ENCODE measurements at regions of chr5 and their contacts with region 1.

Region 1: GRCh38 chr5:67003935-67004729 is 192.5 kb downstream of the CD180 start:
- DNase-seq: peak; percentile 76 to 95 (median 86)
- ATAC-seq: peak; percentile 81
- H3K4me3 ChIP-seq: peak overlapping the region; percentile 67
- H3K4me3 Mint-ChIP-seq: peak overlapping the region; percentile 94
- H3K27ac ChIP-seq: peak overlapping the region; percentile 69 to 77
- H3K27ac Mint-ChIP-seq: peak overlapping the region; percentile 96
- H3K4me1 ChIP-seq: peaks cover 23% of the 10 kb centered on the region
- H3K4me1 Mint-ChIP-seq: peaks cover 57% of the 10 kb centered on the region
- H3K27me3 ChIP-seq: no peaks in the 10 kb centered on the region
- H3K27me3 Mint-ChIP-seq: no peaks in the 10 kb centered on the region
- CTCF ChIP-seq: no peak

Region 2: GRCh38 chr5:66891183-66891925 is 112.8 kb before region 1 on chr5:
- CTCF ChIA-PET with region 1: no interaction called
- POLR2A ChIA-PET with region 1: no interaction called
- intact Hi-C with region 1: no loop called
- DNase-seq: no peak
- ATAC-seq: no peak
- H3K4me3 ChIP-seq: no peak overlapping the region
- H3K4me3 Mint-ChIP-seq: no peak overlapping the region
- H3K27ac ChIP-seq: no peak overlapping the region
- H3K27ac Mint-ChIP-seq: no peak overlapping the region
- H3K4me1 ChIP-seq: no peaks in the 10 kb centered on the region
- H3K4me1 Mint-ChIP-seq: no peaks in the 10 kb centered on the region
- H3K27me3 ChIP-seq: no peaks in the 10 kb centered on the region
- H3K27me3 Mint-ChIP-seq: no peaks in the 10 kb centered on the region
- CTCF ChIP-seq: no peak

Region 3: DNA sequence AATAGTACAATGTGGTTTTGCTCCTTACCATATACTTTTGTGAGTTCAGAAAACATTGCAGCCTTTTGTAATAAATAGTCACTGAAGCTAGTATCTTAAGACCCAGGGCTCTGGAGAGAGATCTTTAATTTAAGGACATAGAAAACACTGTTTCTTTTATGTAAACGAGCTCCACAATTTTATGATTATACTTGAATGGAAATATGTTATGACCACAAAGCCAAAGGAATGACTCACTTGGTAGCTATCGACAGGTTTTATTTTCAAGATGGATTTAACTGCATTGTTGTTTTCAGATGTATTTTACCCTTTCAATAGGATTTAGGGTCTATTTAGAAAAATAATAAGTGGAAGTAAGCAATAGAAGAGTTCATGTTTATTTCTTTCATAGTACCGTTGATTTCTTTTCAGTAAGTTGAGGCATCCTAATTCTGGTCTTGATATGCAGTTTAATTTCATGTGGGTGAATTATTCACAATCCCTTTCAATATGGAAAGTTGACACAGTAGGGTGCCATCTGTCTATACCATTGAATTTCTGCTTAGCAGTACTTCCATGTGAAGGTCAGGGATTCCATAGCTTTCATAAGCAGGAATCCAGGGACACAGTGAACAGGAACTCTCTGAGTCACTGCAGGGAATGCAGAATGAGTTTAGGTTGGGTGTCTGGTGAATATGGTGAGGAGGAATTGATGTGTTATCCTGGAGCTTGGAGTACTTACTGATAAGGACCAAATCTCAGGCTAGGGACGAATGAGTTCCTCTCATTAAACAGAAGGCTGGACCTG is 34.9 kb after region 1 on chr5:
- CTCF ChIA-PET with region 1: no interaction called
- POLR2A ChIA-PET with region 1: interaction called, 3 read pairs
- intact Hi-C with region 1: loop called in 1 of 2 experiments (anchors 5 kb)
- DNase-seq: no peak
- ATAC-seq: no peak
- H3K4me3 ChIP-seq: no peak overlapping the region
- H3K4me3 Mint-ChIP-seq: no peak overlapping the region
- H3K27ac ChIP-seq: no peak overlapping the region
- H3K27ac Mint-ChIP-seq: no peak overlapping the region
- H3K4me1 ChIP-seq: no peaks in the 10 kb centered on the region
- H3K4me1 Mint-ChIP-seq: peaks cover 26% of the 10 kb centered on the region
- H3K27me3 ChIP-seq: no peaks in the 10 kb centered on the region
- H3K27me3 Mint-ChIP-seq: no peaks in the 10 kb centered on the region
- CTCF ChIP-seq: no peak

Region 4: DNA sequence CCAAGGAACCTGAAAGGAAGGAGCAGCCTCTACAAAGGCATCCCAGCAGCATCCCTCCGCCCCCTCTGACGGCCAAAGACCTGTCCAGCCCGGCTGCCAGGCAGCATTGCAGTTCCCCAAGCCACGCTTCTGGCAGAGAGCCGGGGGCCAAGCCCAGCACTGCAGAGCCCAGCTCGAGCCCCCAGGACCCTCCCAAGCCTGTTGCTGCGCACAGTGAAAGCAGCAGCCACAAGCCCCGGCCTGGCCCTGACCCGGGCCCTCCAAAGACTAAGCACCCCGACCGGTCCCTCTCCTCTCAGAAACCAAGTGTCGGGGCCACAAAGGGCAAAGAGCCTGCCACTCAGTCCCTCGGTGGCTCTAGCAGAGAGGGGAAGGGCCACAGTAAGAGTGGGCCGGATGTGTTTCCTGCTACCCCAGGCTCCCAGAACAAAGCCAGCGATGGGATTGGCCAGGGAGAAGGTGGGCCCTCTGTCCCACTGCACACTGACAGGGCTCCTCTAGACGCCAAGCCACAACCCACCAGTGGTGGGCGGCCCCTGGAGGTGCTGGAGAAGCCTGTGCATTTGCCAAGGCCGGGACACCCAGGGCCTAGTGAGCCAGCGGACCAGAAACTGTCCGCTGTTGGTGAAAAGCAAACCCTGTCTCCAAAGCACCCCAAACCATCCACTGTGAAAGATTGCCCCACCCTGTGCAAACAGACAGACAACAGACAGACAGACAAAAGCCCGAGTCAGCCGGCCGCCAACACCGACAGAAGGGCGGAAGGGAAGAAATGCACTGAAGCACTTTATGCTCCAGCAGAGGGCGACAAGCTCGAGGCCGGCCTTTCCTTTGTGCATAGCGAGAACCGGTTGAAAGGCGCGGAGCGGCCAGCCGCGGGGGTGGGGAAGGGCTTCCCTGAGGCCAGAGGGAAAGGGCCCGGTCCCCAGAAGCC is 161.7 kb after region 1 on chr5:
- CTCF ChIA-PET with region 1: interaction called, 4 read pairs
- POLR2A ChIA-PET with region 1: interaction called, 3 read pairs
- intact Hi-C with region 1: loop called in 1 of 2 experiments (anchors 10 kb)
- DNase-seq: peak; percentile 65 to 91 (median 80)
- ATAC-seq: peak; percentile 69
- H3K4me3 ChIP-seq: peak overlapping the region; percentile 56
- H3K4me3 Mint-ChIP-seq: peak overlapping the region; percentile 88
- H3K27ac ChIP-seq: peak overlapping the region; percentile 83 to 88
- H3K27ac Mint-ChIP-seq: peak overlapping the region; percentile 97
- H3K4me1 ChIP-seq: peaks cover 73% of the 10 kb centered on the region
- H3K4me1 Mint-ChIP-seq: peaks cover 71% of the 10 kb centered on the region
- H3K27me3 ChIP-seq: no peaks in the 10 kb centered on the region
- H3K27me3 Mint-ChIP-seq: no peaks in the 10 kb centered on the region
- CTCF ChIP-seq: peak; percentile 73

Region 5: GRCh38 chr5:68215208-68215897 is 1211.2 kb after region 1 on chr5 and contains the start of gene PIK3R1:
- CTCF ChIA-PET with region 1: no interaction called
- POLR2A ChIA-PET with region 1: interaction called, 14 read pairs
- intact Hi-C with region 1: no loop called
- DNase-seq: peak; percentile 78 to 97 (median 90)
- ATAC-seq: peak; percentile 75
- H3K4me3 ChIP-seq: peak within 1 kb of the TSS; percentile 78
- H3K4me3 Mint-ChIP-seq: peak within 1 kb of the TSS; percentile 97
- H3K27ac ChIP-seq: peak within 1 kb of the TSS; percentile 91 to 93
- H3K27ac Mint-ChIP-seq: peak within 1 kb of the TSS; percentile 96
- H3K4me1 ChIP-seq: peaks cover 10% of the 10 kb centered on the region
- H3K4me1 Mint-ChIP-seq: peaks cover 47% of the 10 kb centered on the region
- H3K27me3 ChIP-seq: no peaks in the 10 kb centered on the region
- H3K27me3 Mint-ChIP-seq: no peaks in the 10 kb centered on the region
- CTCF ChIP-seq: peak; percentile 22
- total RNA-seq, gene PIK3R1: 455 to 459 TPM

Region 6: GRCh38 chr5:68433923-68434879 is 1430.1 kb after region 1 on chr5:
- CTCF ChIA-PET with region 1: no interaction called
- POLR2A ChIA-PET with region 1: no interaction called
- intact Hi-C with region 1: loop called in 1 of 2 experiments (anchors 10 kb)
- DNase-seq: peak; percentile 55 to 96 (median 84)
- ATAC-seq: peak; percentile 95
- H3K4me3 ChIP-seq: peak overlapping the region; percentile 24
- H3K4me3 Mint-ChIP-seq: peak overlapping the region; percentile 40
- H3K27ac ChIP-seq: peak overlapping the region; percentile 31 to 68
- H3K27ac Mint-ChIP-seq: peak overlapping the region; percentile 67
- H3K4me1 ChIP-seq: peaks cover 35% of the 10 kb centered on the region
- H3K4me1 Mint-ChIP-seq: peaks cover 35% of the 10 kb centered on the region
- H3K27me3 ChIP-seq: no peaks in the 10 kb centered on the region
- H3K27me3 Mint-ChIP-seq: no peaks in the 10 kb centered on the region
- CTCF ChIP-seq: no peak

Measured in CD4-positive, alpha-beta T cell (primary cell).